ENCODE measurements at regions of chr2 and their contacts with region 1.

Region 1: DNA sequence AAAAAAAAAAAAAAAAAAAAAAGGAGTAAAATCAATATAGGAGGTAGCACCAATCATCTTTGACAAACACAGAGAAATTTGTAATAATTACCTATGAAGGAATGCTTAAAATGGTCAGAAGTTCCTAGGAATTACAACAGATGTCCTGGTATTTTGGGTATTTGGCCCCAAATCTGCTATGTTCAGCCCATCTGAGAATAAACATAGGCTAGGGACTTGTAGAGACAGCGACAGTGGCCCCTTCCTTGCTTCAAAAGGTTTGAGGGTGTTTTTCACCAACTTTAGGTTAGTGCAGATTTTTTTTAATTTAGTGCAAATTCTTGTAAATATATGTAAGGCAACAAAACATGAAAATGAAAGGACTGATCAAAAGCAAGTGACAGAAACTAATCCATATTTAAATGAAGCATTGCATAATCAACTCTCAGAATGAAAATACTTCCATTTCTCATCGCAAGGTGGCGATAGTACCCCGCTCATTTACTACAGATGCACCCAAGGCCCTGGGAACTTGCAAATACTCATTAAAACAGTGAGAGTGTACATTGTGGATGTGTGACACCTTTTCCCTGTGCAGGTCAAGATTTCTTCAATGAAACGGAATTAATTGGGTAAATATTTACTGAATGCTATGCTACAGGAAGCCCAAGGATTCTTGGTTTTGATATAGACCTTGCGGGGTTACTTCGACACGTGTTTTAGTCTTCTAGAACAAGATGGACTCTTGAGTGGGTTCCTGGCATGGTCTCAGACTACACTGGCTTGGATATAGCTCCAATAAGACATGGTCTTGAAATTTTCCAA is 44.6 kb downstream of the FAM124B start:
- DNase-seq: peak; percentile 57
- H3K4me3 ChIP-seq: no peak overlapping the region
- H3K27ac ChIP-seq: no peak overlapping the region
- H3K4me1 ChIP-seq: no peaks in the 10 kb centered on the region
- H3K27me3 ChIP-seq: no peaks in the 10 kb centered on the region
- CTCF ChIP-seq: peak; percentile 79 to 83 (median 79)
- EP300 ChIP-seq: no peak
- POLR2A ChIP-seq: no peak

Region 2: GRCh38 chr2:224058048-224058775 is 299.1 kb before region 1 on chr2:
- intact Hi-C with region 1: no loop called
- DNase-seq: no peak
- H3K4me3 ChIP-seq: no peak overlapping the region
- H3K27ac ChIP-seq: no peak overlapping the region
- H3K4me1 ChIP-seq: no peaks in the 10 kb centered on the region
- H3K27me3 ChIP-seq: no peaks in the 10 kb centered on the region
- CTCF ChIP-seq: no peak
- EP300 ChIP-seq: no peak
- POLR2A ChIP-seq: no peak

Region 3: DNA sequence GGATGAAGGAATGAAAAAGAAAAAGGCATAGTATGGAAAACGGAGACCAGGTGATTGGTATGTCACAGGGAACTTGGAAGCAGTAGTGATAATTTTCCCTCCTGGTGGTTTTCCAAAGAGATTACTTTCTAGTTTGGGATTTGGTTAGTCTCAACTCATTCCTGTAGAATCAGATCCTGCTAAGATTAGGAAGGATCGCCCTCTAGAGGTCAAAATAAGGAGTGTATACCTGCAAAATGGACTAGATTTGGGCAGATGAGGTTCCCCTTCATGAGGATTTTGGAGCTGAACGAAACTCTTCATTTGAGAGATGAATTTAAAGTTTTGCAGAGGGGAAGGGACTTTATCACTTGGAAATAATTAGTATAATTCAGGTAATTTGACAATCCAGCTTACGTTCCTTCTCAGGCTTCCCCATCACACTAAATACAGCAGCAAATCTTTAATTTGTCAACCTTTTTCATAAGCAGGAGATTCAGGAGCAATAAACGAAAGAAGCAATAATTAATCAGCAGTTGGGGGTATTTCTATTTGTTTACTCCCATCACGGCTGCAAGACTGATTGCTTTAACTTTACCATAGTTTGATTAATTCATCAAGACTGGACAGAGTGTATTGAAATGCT is 293.6 kb after region 1 on chr2:
- intact Hi-C with region 1: loop called (anchors 1 kb)
- DNase-seq: no peak
- H3K4me3 ChIP-seq: no peak overlapping the region
- H3K27ac ChIP-seq: no peak overlapping the region
- H3K4me1 ChIP-seq: no peaks in the 10 kb centered on the region
- H3K27me3 ChIP-seq: no peaks in the 10 kb centered on the region
- CTCF ChIP-seq: peak; percentile 68 to 81 (median 75)
- EP300 ChIP-seq: no peak
- POLR2A ChIP-seq: no peak

Region 4: GRCh38 chr2:224778474-224778877 is 421.2 kb after region 1 on chr2:
- intact Hi-C with region 1: loop called (anchors 10 kb)
- DNase-seq: no peak
- H3K4me3 ChIP-seq: no peak overlapping the region
- H3K27ac ChIP-seq: no peak overlapping the region
- H3K4me1 ChIP-seq: no peaks in the 10 kb centered on the region
- H3K27me3 ChIP-seq: no peaks in the 10 kb centered on the region
- CTCF ChIP-seq: peak; percentile 61 to 80 (median 71)
- EP300 ChIP-seq: no peak
- POLR2A ChIP-seq: no peak